Testis (tissue), 5 donors: ENCODE measurements at regions of chr12 and their contacts with region 1.

Region 1: DNA sequence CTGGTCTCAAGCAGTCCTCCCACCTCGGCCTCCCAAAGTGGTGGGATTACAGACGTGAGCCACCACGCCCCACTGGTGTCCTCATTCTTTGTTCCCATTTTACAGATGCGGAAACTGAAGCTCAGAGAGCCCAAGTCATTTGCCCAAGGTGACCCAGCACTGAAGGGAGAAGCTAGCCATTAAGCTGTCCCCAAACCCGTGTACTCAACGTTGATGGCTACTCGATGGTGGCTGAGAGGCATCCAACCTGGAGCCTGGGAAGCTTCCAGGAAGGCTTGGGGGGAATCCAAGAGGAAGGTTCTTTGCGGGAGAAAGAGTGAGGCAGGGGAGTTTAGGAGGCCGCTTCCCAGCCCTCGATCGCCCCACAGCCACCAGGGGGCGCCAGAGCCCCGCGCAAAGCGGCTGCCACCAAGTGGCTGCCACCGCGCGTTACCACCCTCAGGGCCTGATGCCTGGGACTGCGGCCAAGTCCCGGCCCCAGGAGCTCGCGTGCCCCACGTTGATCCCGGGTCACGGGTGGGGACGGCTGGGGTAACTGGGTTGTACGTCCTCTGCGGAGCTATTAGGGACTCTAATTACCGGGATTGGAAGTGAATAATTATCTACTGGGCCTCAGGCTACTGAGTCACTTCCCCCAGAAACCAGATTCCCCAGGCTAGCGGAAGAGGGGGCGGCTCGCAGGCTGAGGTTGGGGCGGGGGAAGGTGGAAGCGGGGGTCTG is 8.8 kb upstream of the SH2B3 start:
- DNase-seq: peak; percentile 86
- H3K4me3 ChIP-seq: peak overlapping the region in 1 of 2 donors; percentile 44
- H3K27ac ChIP-seq: peak overlapping the region in 1 of 2 donors; percentile 24
- H3K4me1 ChIP-seq: peaks cover 6% of the 10 kb centered on the region
- H3K27me3 ChIP-seq: no peaks in the 10 kb centered on the region
- CTCF ChIP-seq: peak; percentile 97 to 99 (median 98)
- POLR2A ChIP-seq: no peak

Region 2: GRCh38 chr12:111444925-111445725 is 48.2 kb after region 1 on chr12:
- intact Hi-C with region 1: loop called (anchors 5 kb)
- DNase-seq: peak; percentile 60
- H3K4me3 ChIP-seq: no peak overlapping the region
- H3K27ac ChIP-seq: peak overlapping the region; percentile 31 to 72
- H3K4me1 ChIP-seq: peaks cover 34% of the 10 kb centered on the region
- H3K27me3 ChIP-seq: no peaks in the 10 kb centered on the region
- CTCF ChIP-seq: no peak
- POLR2A ChIP-seq: no peak

Region 3: DNA sequence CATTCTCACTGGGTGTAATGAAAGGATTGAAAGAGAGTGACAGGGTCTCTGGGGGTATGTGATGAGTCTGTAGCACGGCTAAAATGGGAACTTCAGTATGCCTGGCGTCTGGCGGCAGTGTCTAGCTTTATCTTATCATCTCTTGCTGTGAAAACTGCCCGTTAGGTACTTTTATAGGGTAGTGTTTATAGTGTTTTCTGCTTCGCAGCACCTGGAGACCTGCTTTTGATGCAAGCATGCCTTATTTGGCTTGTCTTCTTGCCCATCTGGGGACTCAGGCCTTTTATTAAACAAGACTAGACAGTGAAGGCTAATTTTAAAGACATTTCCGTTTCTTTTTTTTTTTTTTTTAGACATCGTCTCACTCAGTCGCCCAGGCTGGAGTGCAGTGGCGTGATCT is 333.5 kb after region 1 on chr12:
- intact Hi-C with region 1: no loop called
- DNase-seq: no peak
- H3K4me3 ChIP-seq: no peak overlapping the region
- H3K27ac ChIP-seq: no peak overlapping the region
- H3K4me1 ChIP-seq: no peaks in the 10 kb centered on the region
- H3K27me3 ChIP-seq: no peaks in the 10 kb centered on the region
- CTCF ChIP-seq: no peak
- POLR2A ChIP-seq: no peak

Region 4: GRCh38 chr12:112161711-112162110 is 764.8 kb after region 1 on chr12:
- intact Hi-C with region 1: no loop called
- DNase-seq: no peak
- H3K4me3 ChIP-seq: no peak overlapping the region
- H3K27ac ChIP-seq: no peak overlapping the region
- H3K4me1 ChIP-seq: no peaks in the 10 kb centered on the region
- H3K27me3 ChIP-seq: no peaks in the 10 kb centered on the region
- CTCF ChIP-seq: no peak
- POLR2A ChIP-seq: no peak